GM10248 (cell line): ENCODE measurements at regions of chr6 and their contacts with region 1.

Region 1: DNA sequence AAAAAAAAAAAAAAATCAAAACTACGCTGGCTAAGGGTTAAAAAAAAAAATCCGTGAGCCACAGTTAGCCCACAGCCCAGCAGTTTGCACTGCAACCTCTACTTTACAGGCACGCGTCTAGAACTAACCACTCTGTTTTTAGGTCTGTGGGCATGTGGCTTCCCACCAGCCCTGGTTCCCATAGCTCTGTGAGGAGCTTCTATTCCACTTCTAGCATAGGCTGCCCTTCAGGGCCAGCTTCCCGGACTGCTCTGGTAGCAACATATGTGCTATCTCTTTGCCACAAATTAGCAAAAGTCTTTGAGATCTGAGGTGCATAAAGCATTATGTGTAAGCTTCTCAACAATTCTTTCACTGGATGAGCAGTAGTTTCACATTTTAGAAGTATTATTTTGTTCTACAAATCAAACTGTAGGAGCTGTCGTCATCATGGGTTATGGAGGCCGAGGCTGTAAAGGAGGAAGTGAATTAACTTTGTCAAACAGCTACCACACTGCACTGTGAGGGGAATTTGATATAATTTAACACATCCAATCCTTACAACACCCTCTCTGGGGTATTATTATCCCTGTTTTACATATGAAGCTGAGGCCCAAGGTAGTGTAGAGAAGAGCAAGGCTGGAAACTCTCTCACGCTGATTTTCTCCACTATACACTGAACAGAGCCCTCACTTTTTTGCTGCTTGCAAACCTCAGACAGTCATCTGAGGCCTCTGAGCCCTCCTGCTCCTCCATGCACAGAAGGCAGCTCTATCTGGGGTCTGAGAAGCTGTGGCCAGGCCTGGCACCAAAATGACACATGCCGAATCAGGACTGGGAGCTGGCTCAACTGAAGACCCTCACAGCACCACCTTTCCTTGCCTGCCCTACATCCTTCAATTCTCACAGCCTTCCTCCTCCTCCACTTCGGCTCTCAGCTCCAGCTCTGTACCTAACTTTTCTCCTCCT is 35.4 kb downstream of the MAN1A1 start:
- DNase-seq: no peak
- CTCF ChIP-seq: no peak

Region 2: DNA sequence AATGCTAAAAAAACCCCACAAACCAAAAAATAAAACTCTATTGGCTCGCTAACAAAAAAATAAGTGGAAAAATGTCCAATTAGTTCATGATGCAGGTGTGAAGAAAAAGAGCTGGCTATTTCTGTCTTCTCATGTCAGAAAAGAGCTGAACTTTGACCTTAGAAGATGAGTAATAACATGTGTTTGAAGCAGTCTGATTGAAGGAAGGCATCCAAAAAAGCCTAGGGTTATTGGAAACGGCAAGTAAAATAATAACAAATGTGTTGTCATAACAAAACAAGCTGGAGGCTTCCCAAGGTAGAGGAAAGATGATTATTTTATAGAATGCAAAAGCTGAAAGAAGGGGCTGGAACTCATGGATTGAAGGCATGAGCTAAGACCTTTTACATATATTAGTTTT is 141.4 kb before region 1 on chr6:
- CTCF ChIA-PET with region 1: no interaction called
- POLR2A ChIA-PET with region 1: no interaction called
- DNase-seq: no peak
- CTCF ChIP-seq: no peak

Region 3: GRCh38 chr6:119333707-119334295 is 19.6 kb after region 1 on chr6:
- CTCF ChIA-PET with region 1: interaction called, 14 read pairs
- POLR2A ChIA-PET with region 1: interaction called, 4 read pairs
- DNase-seq: peak; percentile 26
- CTCF ChIP-seq: peak; percentile 47

Region 4: DNA sequence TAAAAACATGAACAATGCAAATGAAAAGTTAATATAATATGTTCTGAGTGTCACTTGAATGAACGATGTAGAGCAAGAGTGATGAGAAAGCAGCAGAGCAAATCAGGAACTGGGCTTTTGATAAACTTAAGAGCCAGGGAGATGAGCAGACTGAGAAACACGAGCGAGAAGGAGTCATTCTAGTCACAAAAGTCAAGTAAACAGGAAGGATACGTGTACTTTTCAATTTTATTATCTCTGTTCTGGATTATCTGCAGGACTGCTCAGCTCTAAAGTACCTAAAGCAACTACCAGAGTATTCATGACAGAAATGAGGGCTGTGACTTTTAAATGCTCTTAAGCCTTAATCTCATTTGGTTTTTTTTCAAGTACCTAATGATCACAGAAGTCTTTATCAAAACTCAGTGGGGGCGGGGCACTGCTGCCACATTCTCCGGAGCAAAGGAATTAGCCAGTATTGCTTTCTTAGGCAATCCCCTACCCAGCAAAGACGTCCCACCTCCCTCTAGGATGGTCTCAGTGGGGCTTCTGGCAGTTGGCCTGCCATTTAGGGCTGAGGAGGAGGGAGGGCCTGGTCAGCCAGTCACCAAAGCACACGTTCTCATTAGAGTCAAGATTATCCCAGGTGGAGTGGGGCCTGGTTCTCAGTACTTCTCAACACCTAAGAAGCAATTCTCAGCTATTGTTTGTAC is 26.7 kb after region 1 on chr6:
- CTCF ChIA-PET with region 1: interaction called, 15 read pairs
- POLR2A ChIA-PET with region 1: interaction called, 4 read pairs
- DNase-seq: no peak
- CTCF ChIP-seq: no peak

Region 5: GRCh38 chr6:119347466-119348095 is 33.4 kb after region 1 on chr6:
- CTCF ChIA-PET with region 1: interaction called, 15 read pairs
- POLR2A ChIA-PET with region 1: interaction called, 20 read pairs
- DNase-seq: peak; percentile 48
- CTCF ChIP-seq: no peak

Region 6: GRCh38 chr6:119449331-119450156 is 135.3 kb after region 1 on chr6:
- CTCF ChIA-PET with region 1: no interaction called
- POLR2A ChIA-PET with region 1: no interaction called
- DNase-seq: no peak
- CTCF ChIP-seq: no peak